ENCODE measurements at regions of chr4 and their contacts with region 1.

Region 1: GRCh38 chr4:13654158-13654797 is 26.8 kb upstream of the BOD1L1 start:
- DNase-seq: peak; percentile 78
- H3K4me3 Mint-ChIP-seq: peak overlapping the region; percentile 72
- H3K27ac Mint-ChIP-seq: no peak overlapping the region
- H3K4me1 Mint-ChIP-seq: peaks cover 9% of the 10 kb centered on the region
- H3K27me3 Mint-ChIP-seq: no peaks in the 10 kb centered on the region
- CTCF ChIP-seq: peak; percentile 61

Region 2: DNA sequence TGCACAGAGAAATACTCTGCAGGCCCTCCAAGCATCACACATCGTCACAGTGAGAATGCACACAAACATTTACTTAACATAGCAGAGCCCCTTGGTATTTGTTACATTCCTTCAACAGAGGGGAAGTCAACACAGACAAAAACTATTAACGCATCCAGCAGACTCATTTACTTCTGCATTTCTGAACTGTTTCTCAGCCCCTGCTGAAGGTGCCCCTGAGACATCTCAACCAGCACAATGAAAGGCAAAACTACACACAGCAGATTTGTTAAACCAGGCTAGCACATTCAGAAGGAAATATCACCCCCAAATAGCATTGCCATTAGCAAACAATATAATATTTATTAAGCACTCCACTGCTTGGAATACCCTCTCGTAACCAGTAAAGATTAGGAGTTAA is 537.1 kb before region 1 on chr4:
- CTCF ChIA-PET with region 1: no interaction called
- POLR2A ChIA-PET with region 1: no interaction called
- intact Hi-C with region 1: no loop called
- DNase-seq: no peak
- H3K4me3 Mint-ChIP-seq: no peak overlapping the region
- H3K27ac Mint-ChIP-seq: no peak overlapping the region
- H3K4me1 Mint-ChIP-seq: no peaks in the 10 kb centered on the region
- H3K27me3 Mint-ChIP-seq: no peaks in the 10 kb centered on the region
- CTCF ChIP-seq: no peak

Region 3: GRCh38 chr4:13640149-13640940 is 13.9 kb before region 1 on chr4:
- CTCF ChIA-PET with region 1: interaction called, 42 read pairs
- POLR2A ChIA-PET with region 1: interaction called, 6 read pairs
- intact Hi-C with region 1: no loop called
- DNase-seq: peak; percentile 94
- H3K4me3 Mint-ChIP-seq: peak overlapping the region; percentile 43
- H3K27ac Mint-ChIP-seq: no peak overlapping the region
- H3K4me1 Mint-ChIP-seq: peaks cover 38% of the 10 kb centered on the region
- H3K27me3 Mint-ChIP-seq: no peaks in the 10 kb centered on the region
- CTCF ChIP-seq: no peak

Region 4: DNA sequence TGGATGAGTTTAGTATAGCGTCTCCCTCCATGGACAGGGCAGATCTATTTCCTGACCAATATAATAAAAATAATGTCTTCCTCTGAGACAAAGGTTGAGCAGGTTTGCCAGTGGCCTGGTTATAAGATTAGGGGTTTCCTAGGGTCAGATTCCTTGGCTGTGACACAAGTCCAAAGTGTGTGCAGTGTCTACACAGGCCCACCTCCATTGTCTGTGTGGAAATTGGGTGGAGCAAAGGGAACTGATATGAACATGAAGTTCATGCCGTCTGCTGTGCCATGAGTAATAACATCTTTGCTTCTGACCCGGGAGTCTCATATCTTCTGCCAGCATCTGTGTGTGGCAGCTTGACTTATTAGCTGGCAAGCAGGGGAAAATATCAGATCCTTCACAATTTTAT is 161.0 kb after region 1 on chr4:
- CTCF ChIA-PET with region 1: no interaction called
- POLR2A ChIA-PET with region 1: no interaction called
- intact Hi-C with region 1: no loop called
- DNase-seq: no peak
- H3K4me3 Mint-ChIP-seq: no peak overlapping the region
- H3K27ac Mint-ChIP-seq: no peak overlapping the region
- H3K4me1 Mint-ChIP-seq: no peaks in the 10 kb centered on the region
- H3K27me3 Mint-ChIP-seq: no peaks in the 10 kb centered on the region
- CTCF ChIP-seq: no peak

Region 5: DNA sequence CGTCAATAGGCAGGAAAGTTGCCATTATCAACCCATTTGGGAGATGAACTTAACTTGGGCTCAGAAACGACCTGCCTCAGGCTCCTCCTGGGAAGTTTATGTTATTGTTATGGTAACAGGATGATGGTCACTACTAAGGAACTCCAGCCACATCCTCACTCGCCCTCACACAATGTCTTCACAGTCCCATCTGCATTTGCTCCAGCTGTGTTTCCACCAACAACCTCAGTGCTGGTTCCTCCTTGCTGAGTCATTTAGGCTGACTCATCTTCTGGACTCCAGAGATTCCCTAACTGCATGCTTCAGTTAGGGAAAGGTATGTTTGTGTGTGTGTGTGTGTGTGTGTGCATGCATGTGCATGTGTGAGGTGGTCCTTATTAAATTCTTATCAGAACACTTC is 266.6 kb after region 1 on chr4:
- CTCF ChIA-PET with region 1: interaction called, 8 read pairs
- POLR2A ChIA-PET with region 1: interaction called, 3 read pairs
- intact Hi-C with region 1: loop called (anchors 1 kb)
- DNase-seq: peak; percentile 97
- H3K4me3 Mint-ChIP-seq: peak overlapping the region; percentile 24
- H3K27ac Mint-ChIP-seq: peak overlapping the region; percentile 96
- H3K4me1 Mint-ChIP-seq: peaks cover 41% of the 10 kb centered on the region
- H3K27me3 Mint-ChIP-seq: no peaks in the 10 kb centered on the region
- CTCF ChIP-seq: no peak

Region 6: GRCh38 chr4:14254252-14254651 is 600.0 kb after region 1 on chr4:
- CTCF ChIA-PET with region 1: interaction called, 8 read pairs
- POLR2A ChIA-PET with region 1: interaction called, 3 read pairs
- intact Hi-C with region 1: loop called (anchors 1 kb)
- DNase-seq: peak; percentile 71
- H3K4me3 Mint-ChIP-seq: no peak overlapping the region
- H3K27ac Mint-ChIP-seq: no peak overlapping the region
- H3K4me1 Mint-ChIP-seq: no peaks in the 10 kb centered on the region
- H3K27me3 Mint-ChIP-seq: no peaks in the 10 kb centered on the region
- CTCF ChIP-seq: peak; percentile 52

Region 7: DNA sequence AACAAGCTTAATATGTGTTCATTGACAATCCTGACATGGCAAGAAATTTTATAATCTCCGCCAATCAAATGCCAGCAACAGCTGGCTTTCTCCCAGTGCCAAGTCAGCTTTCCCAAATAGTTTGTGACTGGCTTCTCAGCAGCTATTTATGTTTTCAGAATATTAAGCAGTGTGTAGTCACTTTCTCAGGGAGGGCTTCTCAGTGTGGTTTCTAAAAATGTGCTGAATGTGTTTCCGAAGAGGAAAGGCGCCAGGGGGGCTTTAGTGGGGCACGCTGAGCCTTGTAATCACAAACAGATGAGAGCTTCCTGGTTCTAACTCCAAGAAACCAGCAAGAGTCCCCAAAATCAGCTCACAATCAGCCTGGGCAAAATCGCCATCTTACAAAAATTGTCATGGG is 1089.3 kb after region 1 on chr4:
- CTCF ChIA-PET with region 1: interaction called, 4 read pairs
- POLR2A ChIA-PET with region 1: no interaction called
- intact Hi-C with region 1: loop called (anchors 5 kb)
- DNase-seq: no peak
- H3K4me3 Mint-ChIP-seq: no peak overlapping the region
- H3K27ac Mint-ChIP-seq: no peak overlapping the region
- H3K4me1 Mint-ChIP-seq: no peaks in the 10 kb centered on the region
- H3K27me3 Mint-ChIP-seq: no peaks in the 10 kb centered on the region
- CTCF ChIP-seq: no peak